ENCODE measurements at regions of chr4 and their contacts with region 1.

Region 1: DNA sequence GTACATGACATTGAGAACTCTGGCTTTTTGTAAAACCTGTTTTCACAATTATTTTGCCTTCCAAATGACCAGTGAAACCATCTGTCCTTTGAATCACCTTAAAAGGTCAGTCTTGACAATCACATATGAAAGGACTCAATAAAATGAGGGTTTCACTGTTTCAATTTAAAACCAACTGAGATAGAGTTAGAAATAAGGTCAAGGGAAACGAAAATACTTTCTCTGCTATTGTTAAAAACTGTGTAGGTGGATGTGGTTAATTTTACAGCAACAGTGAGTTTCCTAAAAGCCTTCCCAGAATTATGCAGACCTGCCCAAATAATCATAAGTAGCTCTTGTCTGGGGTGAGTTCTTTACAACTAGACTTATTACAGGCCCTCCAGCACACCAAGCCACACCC is 839.9 kb downstream of the RAB28 start:
- DNase-seq: no peak
- CTCF ChIP-seq: no peak

Region 2: GRCh38 chr4:12633053-12633651 is 11.1 kb before region 1 on chr4:
- CTCF ChIA-PET with region 1: interaction called, 15 read pairs
- POLR2A ChIA-PET with region 1: no interaction called
- DNase-seq: peak; percentile 45
- CTCF ChIP-seq: peak; percentile 90

Region 3: GRCh38 chr4:12658146-12658545 is 13.9 kb after region 1 on chr4:
- CTCF ChIA-PET with region 1: no interaction called
- POLR2A ChIA-PET with region 1: no interaction called
- DNase-seq: no peak
- CTCF ChIP-seq: no peak

Measured in GM10248 (cell line).